Naive thymus-derived CD4-positive, alpha-beta T cell (primary cell): ENCODE measurements at regions of chr14 and their contacts with region 1.

Region 1: GRCh38 chr14:92039719-92040430 is at the start of gene TRIP11:
- DNase-seq: peak; percentile 88 to 97 (median 94)
- ATAC-seq: peak; percentile 96
- H3K4me3 ChIP-seq: peak within 1 kb of the TSS; percentile 86
- H3K4me3 Mint-ChIP-seq: peak within 1 kb of the TSS; percentile 91 to 99 (median 96)
- H3K27ac ChIP-seq: peak within 1 kb of the TSS; percentile 84
- H3K27ac Mint-ChIP-seq: peak within 1 kb of the TSS in 7 of 9 donors; percentile 96 to 100 (median 98)
- H3K4me1 ChIP-seq: peaks cover 20 to 21% of the 10 kb centered on the region in 2 donors
- H3K4me1 Mint-ChIP-seq: peaks cover 6 to 50% (median 35%) of the 10 kb centered on the region in 7 donors
- H3K27me3 ChIP-seq: no peaks in the 10 kb centered on the region
- H3K27me3 Mint-ChIP-seq: no peaks in the 10 kb centered on the region
- total RNA-seq, gene TRIP11: 34.1 to 72.4 (median 58.4) TPM

Region 2: GRCh38 chr14:91649930-91650329 is 389.9 kb before region 1 on chr14:
- CTCF ChIA-PET with region 1: no interaction called
- POLR2A ChIA-PET with region 1: no interaction called
- intact Hi-C with region 1: loop called in 1 of 2 experiments (anchors 1 kb)
- DNase-seq: peak in 7 of 9 donors; percentile 5 to 59 (median 24)
- ATAC-seq: no peak
- H3K4me3 ChIP-seq: no peak overlapping the region
- H3K4me3 Mint-ChIP-seq: no peak overlapping the region
- H3K27ac ChIP-seq: no peak overlapping the region
- H3K27ac Mint-ChIP-seq: no peak overlapping the region
- H3K4me1 ChIP-seq: no peaks in the 10 kb centered on the region
- H3K4me1 Mint-ChIP-seq: peaks cover 0 to 19% (median 5%) of the 10 kb centered on the region in 7 donors
- H3K27me3 ChIP-seq: no peaks in the 10 kb centered on the region
- H3K27me3 Mint-ChIP-seq: peaks cover 0 to 6% (median 4%) of the 10 kb centered on the region in 5 donors

Region 3: GRCh38 chr14:92022036-92022435 is 17.8 kb before region 1 on chr14:
- CTCF ChIA-PET with region 1: no interaction called
- POLR2A ChIA-PET with region 1: interaction called, 4 read pairs
- intact Hi-C with region 1: loop called in 1 of 2 experiments (anchors 2 kb)
- DNase-seq: no peak
- ATAC-seq: no peak
- H3K4me3 ChIP-seq: no peak overlapping the region
- H3K4me3 Mint-ChIP-seq: no peak overlapping the region
- H3K27ac ChIP-seq: no peak overlapping the region
- H3K27ac Mint-ChIP-seq: no peak overlapping the region
- H3K4me1 ChIP-seq: no peaks in the 10 kb centered on the region
- H3K4me1 Mint-ChIP-seq: peaks cover 5 to 28% (median 16%) of the 10 kb centered on the region in 7 donors
- H3K27me3 ChIP-seq: no peaks in the 10 kb centered on the region
- H3K27me3 Mint-ChIP-seq: no peaks in the 10 kb centered on the region

Region 4: GRCh38 chr14:92106143-92106926 is 66.5 kb after region 1 on chr14 and contains the start of gene ATXN3:
- CTCF ChIA-PET with region 1: interaction called, 10 read pairs
- POLR2A ChIA-PET with region 1: interaction called, 23 read pairs
- intact Hi-C with region 1: loop called (anchors 1 kb)
- DNase-seq: peak; percentile 75 to 97 (median 93)
- ATAC-seq: peak; percentile 95
- H3K4me3 ChIP-seq: peak within 1 kb of the TSS; percentile 82
- H3K4me3 Mint-ChIP-seq: peak within 1 kb of the TSS; percentile 88 to 100 (median 98)
- H3K27ac ChIP-seq: peak within 1 kb of the TSS; percentile 91
- H3K27ac Mint-ChIP-seq: peak within 1 kb of the TSS; percentile 82 to 96 (median 92)
- H3K4me1 ChIP-seq: peaks cover 5 to 17% of the 10 kb centered on the region in 2 donors
- H3K4me1 Mint-ChIP-seq: peaks cover 39 to 72% (median 61%) of the 10 kb centered on the region in 7 donors
- H3K27me3 ChIP-seq: no peaks in the 10 kb centered on the region
- H3K27me3 Mint-ChIP-seq: no peaks in the 10 kb centered on the region
- total RNA-seq, gene ATXN3: 27.8 to 54.9 (median 36.9) TPM

Region 5: GRCh38 chr14:92173668-92174067 is 133.8 kb after region 1 on chr14:
- CTCF ChIA-PET with region 1: no interaction called
- POLR2A ChIA-PET with region 1: no interaction called
- intact Hi-C with region 1: no loop called
- DNase-seq: no peak
- ATAC-seq: no peak
- H3K4me3 ChIP-seq: no peak overlapping the region
- H3K4me3 Mint-ChIP-seq: no peak overlapping the region
- H3K27ac ChIP-seq: no peak overlapping the region
- H3K27ac Mint-ChIP-seq: no peak overlapping the region
- H3K4me1 ChIP-seq: no peaks in the 10 kb centered on the region
- H3K4me1 Mint-ChIP-seq: no peaks in the 10 kb centered on the region
- H3K27me3 ChIP-seq: no peaks in the 10 kb centered on the region
- H3K27me3 Mint-ChIP-seq: no peaks in the 10 kb centered on the region

Region 6: DNA sequence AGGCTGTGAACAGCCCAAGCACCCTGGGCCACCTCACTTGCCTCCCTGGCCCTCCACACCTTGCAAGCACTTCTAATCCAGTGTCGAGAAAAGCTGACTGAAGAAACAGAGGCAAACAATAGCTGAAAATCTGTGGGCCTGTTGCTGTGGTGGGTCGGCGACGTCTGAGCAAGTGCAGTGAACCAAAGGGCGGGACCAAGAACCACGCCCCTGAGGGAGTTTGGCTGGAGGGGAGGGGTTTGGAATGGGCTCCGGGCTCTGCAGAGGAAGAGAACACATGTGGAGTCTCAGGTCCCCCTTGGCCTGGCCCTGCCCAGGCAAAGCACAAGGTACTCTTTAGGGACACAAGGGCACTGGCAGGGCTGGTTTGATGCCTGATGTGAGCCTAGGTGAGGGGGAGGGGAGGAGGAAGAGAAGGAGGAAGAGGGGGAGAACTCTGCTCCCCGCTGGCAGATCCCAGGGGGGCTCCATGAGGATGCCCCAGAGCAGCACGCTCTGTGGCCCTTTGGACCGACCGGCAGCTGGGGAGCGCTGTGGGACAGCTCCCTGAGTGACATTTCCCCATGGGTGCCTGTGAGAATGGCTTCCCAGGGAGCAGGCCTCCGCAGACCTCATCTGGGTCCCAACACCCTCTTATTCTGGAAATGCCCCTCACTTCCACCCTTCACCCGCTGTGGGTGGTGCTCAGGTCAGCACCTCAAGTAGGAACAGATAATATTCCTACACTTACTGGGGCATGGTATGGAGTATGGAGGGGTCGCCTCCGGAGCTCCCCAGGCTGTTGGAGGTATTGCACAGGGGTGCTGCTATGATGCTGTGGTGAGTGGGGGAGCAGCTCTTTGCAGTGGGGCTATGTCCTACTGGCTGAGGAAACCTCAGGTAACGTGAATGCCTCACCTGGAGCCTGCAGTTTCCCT is 167.4 kb after region 1 on chr14:
- CTCF ChIA-PET with region 1: no interaction called
- POLR2A ChIA-PET with region 1: no interaction called
- intact Hi-C with region 1: no loop called
- DNase-seq: no peak
- ATAC-seq: no peak
- H3K4me3 ChIP-seq: no peak overlapping the region
- H3K4me3 Mint-ChIP-seq: no peak overlapping the region
- H3K27ac ChIP-seq: no peak overlapping the region
- H3K27ac Mint-ChIP-seq: no peak overlapping the region
- H3K4me1 ChIP-seq: no peaks in the 10 kb centered on the region
- H3K4me1 Mint-ChIP-seq: no peaks in the 10 kb centered on the region
- H3K27me3 ChIP-seq: no peaks in the 10 kb centered on the region
- H3K27me3 Mint-ChIP-seq: peaks cover 0 to 9% (median 1%) of the 10 kb centered on the region in 5 donors

Region 7: GRCh38 chr14:92793709-92794546 is 754.1 kb after region 1 on chr14 and contains the start of gene GOLGA5:
- CTCF ChIA-PET with region 1: no interaction called
- POLR2A ChIA-PET with region 1: interaction called, 4 read pairs
- intact Hi-C with region 1: loop called in 1 of 2 experiments (anchors 1 kb)
- DNase-seq: peak; percentile 97 to 100 (median 99)
- ATAC-seq: peak; percentile 97
- H3K4me3 ChIP-seq: peak within 1 kb of the TSS; percentile 98
- H3K4me3 Mint-ChIP-seq: peak within 1 kb of the TSS; percentile 78 to 96 (median 92)
- H3K27ac ChIP-seq: peak within 1 kb of the TSS; percentile 91
- H3K27ac Mint-ChIP-seq: peak within 1 kb of the TSS; percentile 78 to 98 (median 95)
- H3K4me1 ChIP-seq: peaks cover 15 to 20% of the 10 kb centered on the region in 2 donors
- H3K4me1 Mint-ChIP-seq: peaks cover 24 to 45% (median 39%) of the 10 kb centered on the region in 7 donors
- H3K27me3 ChIP-seq: no peaks in the 10 kb centered on the region
- H3K27me3 Mint-ChIP-seq: peaks cover 0 to 9% (median 0%) of the 10 kb centered on the region in 5 donors
- total RNA-seq, gene GOLGA5: 9.7 to 25.8 (median 23.5) TPM